Astrocyte of the cerebellum (primary cell): ENCODE measurements at regions of chr14 and their contacts with region 1.

Region 1: GRCh38 chr14:67943947-67944346 is 124.4 kb downstream of the RAD51B start:
- DNase-seq: peak; percentile 85
- H3K4me3 ChIP-seq: no peak overlapping the region
- CTCF ChIP-seq: peak; percentile 61

Region 2: GRCh38 chr14:68807148-68807600 is 863.2 kb after region 1 on chr14:
- in situ Hi-C with region 1: loop called (anchors 5 kb)
- DNase-seq: no peak
- H3K4me3 ChIP-seq: no peak overlapping the region
- CTCF ChIP-seq: no peak